ENCODE measurements at regions of chrX and their contacts with region 1.

Region 1: DNA sequence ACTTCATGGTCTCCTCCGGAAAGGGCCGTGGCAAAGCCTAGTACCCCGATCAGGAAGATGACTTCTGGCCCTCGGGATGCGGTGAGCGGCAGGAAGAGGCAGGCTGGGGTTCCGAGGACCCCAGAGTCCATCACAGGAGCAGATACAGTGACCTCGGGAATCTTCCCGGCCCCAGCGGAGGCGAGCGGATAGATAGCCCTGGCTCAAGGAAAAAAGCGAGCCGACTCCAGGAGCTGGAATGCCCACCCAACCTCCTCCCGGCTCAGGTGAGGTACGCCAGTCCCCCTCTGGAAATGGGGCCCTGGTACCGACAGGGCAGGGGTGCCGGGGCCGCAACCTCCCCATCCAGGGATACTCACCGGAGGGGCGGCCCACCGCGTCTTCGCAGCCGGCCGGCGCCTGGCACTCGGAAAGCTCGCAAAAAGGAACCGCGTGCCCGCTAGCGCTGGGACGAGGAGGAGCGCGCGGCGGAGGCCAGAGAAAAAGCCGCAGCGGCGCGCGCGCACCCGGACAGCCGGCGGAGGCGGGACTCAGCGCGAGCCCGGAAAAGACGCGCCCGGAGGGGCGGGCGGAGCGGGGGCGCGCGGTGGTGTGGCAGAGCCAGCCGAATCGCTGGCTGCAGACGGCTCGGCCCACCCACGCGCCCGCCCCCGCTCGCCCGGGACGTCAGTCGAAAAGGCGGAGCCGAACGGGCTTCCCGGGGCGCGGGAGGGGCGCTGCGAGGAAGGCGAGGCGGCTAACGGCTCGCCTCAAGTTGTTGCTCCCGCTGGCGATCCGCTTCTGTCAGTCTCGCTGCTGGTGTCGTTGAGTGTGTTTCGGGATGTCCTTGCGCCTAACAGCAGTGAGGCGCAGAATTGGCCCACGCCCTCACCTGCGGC is at the start of gene ACSL4:
- DNase-seq: peak; percentile 78 to 93
- H3K4me3 ChIP-seq: peak within 1 kb of the TSS; percentile 94
- H3K27ac ChIP-seq: peak within 1 kb of the TSS; percentile 47
- H3K4me1 ChIP-seq: peaks cover 21% of the 10 kb centered on the region
- H3K27me3 ChIP-seq: no peaks in the 10 kb centered on the region
- CTCF ChIP-seq: no peak
- total RNA-seq, gene ACSL4: 78.6 and 81.1 TPM in 2 replicates

Region 2: GRCh38 chrX:109536439-109537336 is 196.3 kb before region 1 on chrX and contains the start of gene NXT2:
- CTCF ChIA-PET with region 1: no interaction called
- POLR2A ChIA-PET with region 1: interaction called, 14 read pairs
- intact Hi-C with region 1: no loop called
- DNase-seq: peak; percentile 87 to 93
- H3K4me3 ChIP-seq: peak within 1 kb of the TSS; percentile 73
- H3K27ac ChIP-seq: peak within 1 kb of the TSS; percentile 97
- H3K4me1 ChIP-seq: peaks cover 14% of the 10 kb centered on the region
- H3K27me3 ChIP-seq: no peaks in the 10 kb centered on the region
- CTCF ChIP-seq: no peak
- total RNA-seq, gene NXT2: 12.1 and 20.0 TPM in 2 replicates

Region 3: GRCh38 chrX:109709129-109709631 is 23.8 kb before region 1 on chrX:
- CTCF ChIA-PET with region 1: interaction called, 4 read pairs
- POLR2A ChIA-PET with region 1: interaction called, 16 read pairs
- intact Hi-C with region 1: no loop called
- DNase-seq: peak; percentile 3 to 88
- H3K4me3 ChIP-seq: peak overlapping the region; percentile 13; the same call in 1 of the 2 replicates
- H3K27ac ChIP-seq: peak overlapping the region; percentile 74
- H3K4me1 ChIP-seq: peaks cover 33% of the 10 kb centered on the region
- H3K27me3 ChIP-seq: no peaks in the 10 kb centered on the region
- CTCF ChIP-seq: no peak

Region 4: DNA sequence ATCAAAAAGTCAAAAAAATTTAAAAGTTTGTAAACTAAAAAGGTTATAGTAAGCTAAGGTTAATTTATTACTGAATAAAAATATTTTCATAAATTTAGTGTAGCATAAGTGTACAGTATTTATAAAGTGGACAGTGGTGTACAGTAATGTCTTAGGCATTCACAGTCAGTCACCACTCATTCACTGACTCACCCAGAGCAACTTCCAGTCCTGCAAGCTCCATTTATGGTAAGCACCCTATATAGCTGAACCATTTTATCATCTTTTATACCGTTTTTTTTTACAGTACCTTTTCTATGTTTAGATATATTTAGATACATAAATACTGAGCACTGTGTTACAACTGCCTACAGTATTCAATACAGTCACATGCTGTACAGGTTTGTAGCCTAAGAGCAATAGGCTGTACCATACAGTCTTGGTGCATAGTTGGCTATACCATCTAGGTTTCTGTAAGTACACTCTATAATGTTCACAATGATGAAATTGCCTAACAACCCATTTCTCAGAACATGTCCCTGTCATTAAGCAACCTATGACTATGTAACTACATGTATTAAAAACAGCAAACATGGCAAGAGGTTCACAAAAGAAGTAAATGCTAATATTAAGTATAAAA is 18.6 kb before region 1 on chrX:
- CTCF ChIA-PET with region 1: interaction called, 4 read pairs
- POLR2A ChIA-PET with region 1: interaction called, 10 read pairs
- intact Hi-C with region 1: no loop called
- DNase-seq: peak; percentile 23 to 87
- H3K4me3 ChIP-seq: no peak overlapping the region
- H3K27ac ChIP-seq: peak overlapping the region; percentile 79
- H3K4me1 ChIP-seq: peaks cover 40% of the 10 kb centered on the region
- H3K27me3 ChIP-seq: no peaks in the 10 kb centered on the region
- CTCF ChIP-seq: no peak

Region 5: GRCh38 chrX:109760241-109760922 is 27.4 kb after region 1 on chrX:
- CTCF ChIA-PET with region 1: no interaction called
- POLR2A ChIA-PET with region 1: no interaction called
- intact Hi-C with region 1: loop called (anchors 2 kb)
- DNase-seq: peak; percentile 12 to 47
- H3K4me3 ChIP-seq: no peak overlapping the region
- H3K27ac ChIP-seq: no peak overlapping the region
- H3K4me1 ChIP-seq: peaks cover 15% of the 10 kb centered on the region
- H3K27me3 ChIP-seq: no peaks in the 10 kb centered on the region
- CTCF ChIP-seq: no peak

Region 6: GRCh38 chrX:110412971-110413721 is 680.1 kb after region 1 on chrX:
- CTCF ChIA-PET with region 1: interaction called, 3 read pairs
- POLR2A ChIA-PET with region 1: no interaction called
- intact Hi-C with region 1: loop called (anchors 5 kb)
- DNase-seq: peak; percentile 58 to 71
- H3K4me3 ChIP-seq: no peak overlapping the region
- H3K27ac ChIP-seq: no peak overlapping the region
- H3K4me1 ChIP-seq: peaks cover 20% of the 10 kb centered on the region
- H3K27me3 ChIP-seq: no peaks in the 10 kb centered on the region
- CTCF ChIP-seq: peak; percentile 94

Measured in PC-9 (cell line).